PC-3 (cell line): ENCODE measurements at regions of chr1 and their contacts with region 1.

Region 1: DNA sequence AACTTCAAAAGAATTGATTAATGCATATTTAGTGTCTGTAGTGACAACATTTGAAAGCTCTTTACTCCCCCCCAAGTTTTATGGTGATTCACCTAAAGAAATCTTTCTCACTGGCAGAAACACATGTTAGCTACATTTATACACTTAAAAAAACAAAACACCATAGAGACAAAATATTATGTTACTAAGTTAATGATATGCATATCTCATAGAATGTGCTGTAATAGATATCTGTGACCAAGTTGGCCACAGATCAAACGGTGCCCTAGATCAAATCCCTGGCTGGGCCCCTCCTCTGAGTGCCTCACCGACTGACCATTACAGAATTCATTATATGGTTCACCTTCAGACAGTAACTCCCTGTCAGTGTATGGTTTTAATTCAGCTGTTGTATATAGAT is 322.1 kb upstream of the LYPLAL1 start:
- DNase-seq: no peak
- ATAC-seq: no peak
- H3K4me3 ChIP-seq: no peak overlapping the region
- H3K27ac ChIP-seq: no peak overlapping the region
- H3K4me1 ChIP-seq: peaks cover 7% of the 10 kb centered on the region
- H3K27me3 ChIP-seq: no peaks in the 10 kb centered on the region
- CTCF ChIP-seq: no peak

Region 2: DNA sequence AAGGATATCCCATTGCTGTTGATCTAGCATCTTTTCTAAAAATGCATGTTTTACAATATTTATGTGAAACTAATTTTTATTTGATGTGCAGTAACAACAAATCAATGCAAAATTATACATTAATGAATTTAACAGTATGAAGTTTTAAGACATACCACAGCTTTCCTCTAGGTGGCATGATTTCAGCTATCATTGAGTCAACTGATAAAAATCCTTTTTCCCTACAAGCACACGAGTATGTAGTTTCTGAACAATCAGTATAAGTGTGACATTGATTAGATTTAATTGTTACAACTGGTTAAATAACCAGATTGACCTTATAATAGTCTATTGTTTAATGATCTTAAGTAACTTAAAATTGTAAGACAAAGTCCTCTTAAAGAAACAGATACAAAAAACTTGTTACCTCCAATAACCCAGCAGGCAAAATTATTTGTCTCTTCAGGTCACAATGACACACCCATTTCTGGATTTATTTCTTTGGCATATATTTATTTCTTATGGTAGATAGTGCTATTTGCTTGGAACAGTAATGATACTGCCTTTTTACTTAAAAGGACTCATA is 512.2 kb before region 1 on chr1:
- CTCF ChIA-PET with region 1: no interaction called
- POLR2A ChIA-PET with region 1: no interaction called
- intact Hi-C with region 1: no loop called
- DNase-seq: peak; percentile 88
- ATAC-seq: peak; percentile 63
- H3K4me3 ChIP-seq: no peak overlapping the region
- H3K27ac ChIP-seq: peak overlapping the region; percentile 6
- H3K4me1 ChIP-seq: peaks cover 18% of the 10 kb centered on the region
- H3K27me3 ChIP-seq: no peaks in the 10 kb centered on the region
- CTCF ChIP-seq: peak; percentile 98

Region 3: DNA sequence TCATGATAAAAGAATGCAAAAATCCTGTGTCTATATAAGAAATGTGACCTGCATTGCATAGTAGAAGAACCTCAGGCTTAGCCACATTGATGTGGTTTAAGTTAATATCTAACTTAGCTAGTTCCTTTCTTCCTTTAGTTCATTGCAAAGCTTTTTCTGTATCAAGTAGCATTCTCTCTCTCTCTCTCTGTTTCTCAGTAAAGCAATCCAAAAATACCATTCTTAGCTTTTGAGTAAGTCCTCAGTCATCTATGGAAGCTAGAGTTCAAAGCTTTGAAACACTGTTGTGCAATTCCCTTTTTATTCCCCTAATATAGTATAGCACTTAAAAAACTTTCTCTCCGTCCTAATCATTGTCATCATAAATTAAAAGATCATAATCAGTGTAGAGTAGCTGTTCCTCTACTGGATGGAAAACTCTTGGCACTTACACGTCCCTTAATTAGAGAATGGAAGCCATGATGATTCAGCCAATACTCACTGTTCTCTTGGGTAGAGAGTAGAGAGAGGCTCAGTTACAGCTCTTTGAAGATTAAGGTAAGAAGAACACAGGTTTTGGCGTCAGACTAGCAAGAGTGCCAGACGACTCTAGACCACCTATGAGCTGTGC is 28.2 kb before region 1 on chr1:
- CTCF ChIA-PET with region 1: no interaction called
- POLR2A ChIA-PET with region 1: no interaction called
- intact Hi-C with region 1: no loop called
- DNase-seq: peak; percentile 48
- ATAC-seq: no peak
- H3K4me3 ChIP-seq: no peak overlapping the region
- H3K27ac ChIP-seq: no peak overlapping the region
- H3K4me1 ChIP-seq: 0 out of 2 replicates have a peak, but pooled peaks cover 4% of the 10 kb centered on the region
- H3K27me3 ChIP-seq: no peaks in the 10 kb centered on the region
- CTCF ChIP-seq: no peak

Region 4: DNA sequence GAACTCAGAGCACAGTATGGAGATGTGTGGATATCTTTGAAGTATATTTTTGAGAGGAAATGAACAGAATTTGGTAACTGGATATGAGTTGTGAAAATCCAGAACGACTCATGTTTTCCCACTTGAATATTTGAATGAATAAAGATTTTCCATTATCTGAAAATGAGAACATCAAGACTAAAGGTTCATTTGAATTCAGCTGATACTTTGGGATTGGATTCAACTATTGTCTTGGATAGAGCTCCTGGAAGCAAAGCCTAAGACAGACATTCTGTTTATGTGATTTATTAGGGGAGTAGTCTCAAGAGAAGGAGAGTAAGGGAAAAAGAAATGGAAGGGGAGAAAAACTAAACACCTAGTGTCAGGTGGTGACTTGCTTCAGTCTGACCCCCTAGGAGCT is 66.1 kb after region 1 on chr1:
- CTCF ChIA-PET with region 1: no interaction called
- POLR2A ChIA-PET with region 1: no interaction called
- intact Hi-C with region 1: loop called (anchors 10 kb)
- DNase-seq: no peak
- ATAC-seq: no peak
- H3K4me3 ChIP-seq: no peak overlapping the region
- H3K27ac ChIP-seq: no peak overlapping the region
- H3K4me1 ChIP-seq: no peaks in the 10 kb centered on the region
- H3K27me3 ChIP-seq: no peaks in the 10 kb centered on the region
- CTCF ChIP-seq: no peak

Region 5: DNA sequence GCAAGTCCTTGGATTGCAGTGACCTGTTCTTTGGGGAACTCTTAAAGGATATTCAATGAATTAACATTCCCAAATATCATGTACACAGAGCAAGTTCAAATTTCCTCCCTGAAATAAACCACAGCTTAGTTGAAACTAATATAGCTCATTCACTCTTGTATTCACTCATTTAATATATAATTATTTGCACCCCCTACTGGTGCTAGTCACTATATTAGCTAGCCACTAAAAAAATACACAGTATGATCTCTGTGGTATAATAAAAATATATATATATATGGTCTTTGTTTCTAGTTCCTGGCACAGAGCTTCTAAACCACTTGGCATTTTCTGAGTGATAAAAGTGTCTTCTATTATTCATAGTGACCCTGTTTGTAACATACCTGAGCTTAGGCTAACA is 144.8 kb after region 1 on chr1:
- CTCF ChIA-PET with region 1: no interaction called
- POLR2A ChIA-PET with region 1: no interaction called
- intact Hi-C with region 1: no loop called
- DNase-seq: peak; percentile 41
- ATAC-seq: peak; percentile 69
- H3K4me3 ChIP-seq: no peak overlapping the region
- H3K27ac ChIP-seq: no peak overlapping the region
- H3K4me1 ChIP-seq: peaks cover 9% of the 10 kb centered on the region; the same call in 1 of the 2 replicates
- H3K27me3 ChIP-seq: no peaks in the 10 kb centered on the region
- CTCF ChIP-seq: peak; percentile 60